ENCODE measurements at regions of chr11 and their contacts with region 1.

Region 1: DNA sequence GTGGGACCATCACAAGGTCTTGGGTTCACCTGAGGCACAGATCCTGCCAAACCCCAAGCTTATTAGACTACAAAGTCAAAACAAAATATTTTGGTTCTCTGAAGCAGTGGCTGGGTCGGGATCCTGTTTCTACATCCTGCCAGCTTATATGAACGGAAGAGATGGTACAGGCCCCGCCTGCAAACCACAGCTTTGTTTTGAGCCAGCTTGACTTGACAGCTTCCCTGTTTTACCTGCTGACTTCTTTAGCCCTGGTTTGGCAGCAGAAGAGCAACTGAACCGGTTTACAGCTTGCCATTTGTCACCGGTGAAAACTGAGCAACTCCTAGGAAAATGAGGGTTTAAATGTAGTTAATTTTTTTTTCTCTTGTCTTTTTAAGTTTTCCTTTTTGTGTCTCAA is 11.4 kb downstream of the PACS1 start:
- DNase-seq: peak; percentile 67
- H3K4me3 Mint-ChIP-seq: peak overlapping the region; percentile 83
- H3K27ac Mint-ChIP-seq: peak overlapping the region; percentile 97
- H3K4me1 Mint-ChIP-seq: peaks cover 59% of the 10 kb centered on the region
- H3K27me3 Mint-ChIP-seq: no peaks in the 10 kb centered on the region

Region 2: GRCh38 chr11:66100272-66101065 is 19.0 kb after region 1 on chr11:
- intact Hi-C with region 1: loop called (anchors 2 kb)
- DNase-seq: peak; percentile 60
- H3K4me3 Mint-ChIP-seq: peak overlapping the region; percentile 75
- H3K27ac Mint-ChIP-seq: peak overlapping the region; percentile 84
- H3K4me1 Mint-ChIP-seq: peaks cover 41% of the 10 kb centered on the region
- H3K27me3 Mint-ChIP-seq: no peaks in the 10 kb centered on the region

Region 3: DNA sequence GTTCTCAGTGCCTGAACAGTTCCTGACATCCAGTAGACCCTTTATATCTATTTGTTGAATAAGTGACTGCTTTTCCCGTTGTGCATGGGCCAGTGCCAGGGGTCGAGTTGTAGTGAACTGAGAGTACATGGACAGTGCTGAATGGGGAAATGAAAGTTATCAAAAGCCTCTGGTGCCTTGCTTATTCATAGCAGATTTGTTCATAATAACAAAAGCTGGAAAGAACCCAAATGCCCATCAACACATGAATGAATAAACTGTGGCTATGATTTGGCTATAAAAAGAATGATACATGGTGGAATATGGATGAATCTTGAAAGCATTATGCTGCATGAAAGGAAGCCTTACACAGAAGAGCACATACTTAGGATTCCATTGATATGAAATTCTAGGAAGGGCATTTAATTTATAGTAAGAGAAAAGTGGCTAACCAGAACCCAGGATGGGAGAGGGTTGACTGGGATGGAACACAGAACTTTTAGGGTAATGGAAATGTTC is 31.1 kb after region 1 on chr11:
- intact Hi-C with region 1: no loop called
- DNase-seq: no peak
- H3K4me3 Mint-ChIP-seq: no peak overlapping the region
- H3K27ac Mint-ChIP-seq: peak overlapping the region; percentile 79
- H3K4me1 Mint-ChIP-seq: peaks cover 74% of the 10 kb centered on the region
- H3K27me3 Mint-ChIP-seq: no peaks in the 10 kb centered on the region

Region 4: DNA sequence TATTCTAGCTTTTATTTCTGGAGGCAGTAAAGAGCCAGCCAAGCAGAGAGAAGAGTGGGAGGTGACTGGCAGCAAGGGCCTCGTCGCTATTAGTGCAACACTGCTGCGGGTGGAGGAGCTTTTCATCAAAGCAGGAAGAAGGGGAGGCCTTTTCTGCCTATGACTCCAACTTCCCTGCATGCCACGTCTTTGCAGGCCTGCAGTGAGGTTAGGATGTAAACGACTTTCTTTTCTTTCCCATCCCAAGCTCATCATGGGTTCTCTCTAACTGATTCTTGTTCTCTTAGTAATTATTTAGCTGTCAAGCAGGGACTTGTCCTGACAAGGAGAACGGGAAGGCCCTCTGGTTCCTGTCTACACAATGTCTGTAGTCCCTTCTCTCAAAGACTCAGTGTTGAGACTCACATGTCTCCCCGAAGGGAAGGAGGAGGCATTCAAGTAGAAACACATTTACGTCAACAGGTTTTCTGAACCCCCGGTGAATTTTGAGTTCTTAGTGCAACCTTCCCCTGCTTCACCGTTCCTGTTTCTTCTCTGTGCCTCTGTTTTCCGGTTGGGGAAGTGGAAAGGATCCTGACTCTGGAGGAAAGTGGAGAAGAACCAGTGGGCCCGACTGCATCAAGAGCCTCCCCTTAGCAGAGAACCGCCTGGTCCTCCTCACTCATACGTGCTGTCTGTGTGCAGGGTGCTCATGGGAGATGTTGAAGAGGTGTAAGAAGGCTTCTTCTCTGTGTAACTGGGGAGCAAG is 45.5 kb after region 1 on chr11:
- intact Hi-C with region 1: loop called (anchors 1 kb)
- DNase-seq: peak; percentile 48
- H3K4me3 Mint-ChIP-seq: peak overlapping the region; percentile 67
- H3K27ac Mint-ChIP-seq: peak overlapping the region; percentile 95
- H3K4me1 Mint-ChIP-seq: peaks cover 56% of the 10 kb centered on the region
- H3K27me3 Mint-ChIP-seq: no peaks in the 10 kb centered on the region

Region 5: DNA sequence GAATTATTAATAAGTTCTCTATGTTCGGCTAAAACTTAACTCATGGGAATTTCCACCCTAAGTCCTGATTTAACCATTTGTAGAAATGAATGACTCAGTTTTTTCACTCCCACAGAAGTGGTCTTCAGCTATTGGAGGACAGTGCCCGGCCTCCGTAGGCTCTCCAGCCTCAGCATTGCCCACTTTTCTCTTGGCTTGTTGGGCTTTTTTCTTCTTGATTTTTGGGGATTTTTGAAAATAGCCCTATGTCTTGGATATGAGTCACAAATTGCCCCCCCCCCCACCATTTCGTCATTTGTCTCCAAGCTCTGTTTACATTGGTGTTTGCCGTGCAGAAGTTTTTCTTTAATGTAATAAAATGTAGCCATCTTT is 55.2 kb after region 1 on chr11:
- intact Hi-C with region 1: loop called (anchors 2 kb)
- DNase-seq: no peak
- H3K4me3 Mint-ChIP-seq: no peak overlapping the region
- H3K27ac Mint-ChIP-seq: no peak overlapping the region
- H3K4me1 Mint-ChIP-seq: peaks cover 40% of the 10 kb centered on the region
- H3K27me3 Mint-ChIP-seq: no peaks in the 10 kb centered on the region

Measured in activated T-helper 2 cell treated with anti-CD3 and anti-CD28 coated beads, Interferon-gamma antibody, Interleukin-2, Interleukin-4, amounts not matched to agents 10 μg/mL and 5 μg/mL and 100 μg/mL, durations not matched to agents 14 hours and 24 hours and 36 hours (primary cell).